Pancreas (tissue), 10 donors: ENCODE measurements at regions of chr2 and their contacts with region 1.

Region 1: DNA sequence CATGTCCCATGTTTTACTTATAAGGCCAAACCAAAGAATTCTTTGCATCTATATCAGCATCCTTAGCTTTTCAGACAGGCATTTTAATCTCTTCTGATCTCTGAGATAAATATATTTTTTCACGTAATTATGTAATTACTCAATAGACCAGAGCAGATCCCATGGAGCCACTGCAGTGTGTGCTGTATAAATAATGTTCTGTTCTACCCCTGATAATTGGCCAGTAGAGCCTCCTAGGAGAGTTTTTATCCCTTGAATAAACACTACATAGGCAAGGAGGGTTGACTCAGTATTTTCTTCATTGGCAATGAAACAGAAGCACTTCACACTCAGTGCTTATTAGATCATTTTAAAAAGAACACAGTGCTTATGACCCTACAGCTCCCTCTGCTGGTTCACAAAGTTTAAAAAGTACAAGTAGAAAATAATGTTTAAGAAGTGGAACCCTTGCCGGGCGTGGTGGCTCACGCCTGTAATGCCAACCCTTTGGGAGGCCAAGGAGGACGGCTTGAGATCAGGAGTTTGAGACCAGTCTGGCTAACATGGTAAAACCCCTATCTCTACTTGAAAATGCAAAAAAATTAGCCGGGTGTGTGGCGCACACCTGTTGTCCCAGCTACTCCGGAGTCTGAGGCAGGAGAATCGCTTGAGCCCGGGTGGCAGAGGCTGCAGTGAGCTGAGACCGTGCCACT is 91.9 kb downstream of the PPP1R1C start:
- DNase-seq: peak in 5 of 6 donors; percentile 13 to 52 (median 35)
- ATAC-seq: peak; percentile 99
- H3K4me3 ChIP-seq: no peak overlapping the region
- H3K27ac ChIP-seq: no peak overlapping the region
- H3K4me1 ChIP-seq: peaks cover 0 to 4% (median 0%) of the 10 kb centered on the region in 3 donors
- H3K27me3 ChIP-seq: no peaks in the 10 kb centered on the region
- CTCF ChIP-seq: peak; percentile 18 to 59 (median 40)

Region 2: DNA sequence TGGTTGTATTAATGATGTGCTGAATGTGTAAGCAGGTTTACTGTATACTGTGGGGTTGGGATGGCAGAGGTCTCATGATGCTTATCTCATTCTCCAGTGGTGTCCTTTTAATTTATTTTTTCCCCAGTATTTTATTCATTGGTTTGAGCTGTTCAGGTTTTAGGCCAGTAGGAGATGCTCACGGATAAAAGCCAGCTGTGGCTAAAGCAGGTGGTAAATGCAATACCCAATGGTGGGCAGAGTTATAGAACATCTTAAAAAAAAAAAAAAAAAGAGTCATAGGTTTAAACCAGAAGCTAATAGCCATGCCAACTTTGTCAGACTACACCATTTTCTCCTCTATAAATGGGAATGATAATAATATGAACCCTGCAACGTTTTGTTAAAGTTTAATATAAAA is 339.5 kb before region 1 on chr2:
- intact Hi-C with region 1: loop called in 2 of 3 experiments (anchors 5 to 10 kb)
- DNase-seq: no peak
- ATAC-seq: peak in 3 of 4 donors; percentile 59 to 71 (median 62)
- H3K4me3 ChIP-seq: no peak overlapping the region
- H3K27ac ChIP-seq: no peak overlapping the region
- H3K4me1 ChIP-seq: peaks cover 0 to 8% (median 7%) of the 10 kb centered on the region in 3 donors
- H3K27me3 ChIP-seq: no peaks in the 10 kb centered on the region
- CTCF ChIP-seq: peak in 1 of 4 donors; percentile 9